ENCODE measurements at regions of chr10 and their contacts with region 1.

Region 1: DNA sequence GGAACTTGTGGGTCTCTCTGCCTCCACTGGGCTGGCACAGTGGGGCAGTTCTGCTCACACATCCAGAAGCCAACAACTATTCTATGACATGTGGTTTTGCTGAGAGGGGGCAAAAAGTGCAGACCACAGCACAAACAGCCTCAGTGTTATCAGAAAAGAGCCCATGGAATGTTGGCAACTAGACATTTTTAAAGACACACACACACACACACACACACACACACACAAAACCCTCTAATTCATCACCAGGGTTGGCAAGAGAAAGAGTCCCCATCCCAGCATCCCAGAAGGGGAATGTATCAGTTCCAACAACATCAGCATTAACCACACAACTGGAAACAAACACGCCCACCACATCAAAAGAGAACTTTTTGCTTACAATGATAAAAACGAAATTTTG is 117.0 kb downstream of the FGFR2 start:
- DNase-seq: no peak

Region 2: GRCh38 chr10:121437596-121437995 is 43.6 kb before region 1 on chr10:
- intact Hi-C with region 1: loop called (anchors 10 kb)
- DNase-seq: peak in 41 of 42 donors; percentile 15 to 82 (median 49)

Measured in head of caudate nucleus (tissue), 42 donors.